HCT116 (cell line): ENCODE measurements at regions of chr15 and their contacts with region 1.

Region 1: GRCh38 chr15:101258238-101259144 is 6.6 kb upstream of the CHSY1 start:
- DNase-seq: peak; percentile 51
- ATAC-seq: peak; percentile 88
- H3K4me3 ChIP-seq: no peak overlapping the region
- H3K27ac ChIP-seq: no peak overlapping the region
- H3K4me1 ChIP-seq: no peaks in the 10 kb centered on the region
- H3K27me3 ChIP-seq: no peaks in the 10 kb centered on the region
- CTCF ChIP-seq: peak; percentile 79 to 97 (median 96)
- POLR2A ChIP-seq: no peak
- RAD21 ChIP-seq: peak; percentile 97

Region 2: GRCh38 chr15:100627789-100628395 is 630.6 kb before region 1 on chr15:
- CTCF ChIA-PET with region 1: no interaction called
- POLR2A ChIA-PET with region 1: no interaction called
- RAD21 ChIA-PET with region 1: no interaction called
- intact Hi-C with region 1: loop called (anchors 1 kb)
- DNase-seq: peak; percentile 69
- ATAC-seq: peak; percentile 92
- H3K4me3 ChIP-seq: no peak overlapping the region
- H3K27ac ChIP-seq: no peak overlapping the region
- H3K4me1 ChIP-seq: no peaks in the 10 kb centered on the region
- H3K27me3 ChIP-seq: no peaks in the 10 kb centered on the region
- CTCF ChIP-seq: peak; percentile 69 to 84 (median 73)
- POLR2A ChIP-seq: no peak
- RAD21 ChIP-seq: peak; percentile 86

Region 3: GRCh38 chr15:101014921-101015841 is 243.3 kb before region 1 on chr15:
- CTCF ChIA-PET with region 1: interaction called, 14 read pairs
- POLR2A ChIA-PET with region 1: interaction called, 3 read pairs
- RAD21 ChIA-PET with region 1: interaction called in 1 of 2 experiments, 6 read pairs
- intact Hi-C with region 1: loop called (anchors 1 kb)
- DNase-seq: peak; percentile 32
- ATAC-seq: peak; percentile 86
- H3K4me3 ChIP-seq: no peak overlapping the region
- H3K27ac ChIP-seq: no peak overlapping the region
- H3K4me1 ChIP-seq: no peaks in the 10 kb centered on the region
- H3K27me3 ChIP-seq: no peaks in the 10 kb centered on the region
- CTCF ChIP-seq: peak; percentile 89 to 97 (median 89)
- POLR2A ChIP-seq: no peak
- RAD21 ChIP-seq: peak; percentile 87

Region 4: DNA sequence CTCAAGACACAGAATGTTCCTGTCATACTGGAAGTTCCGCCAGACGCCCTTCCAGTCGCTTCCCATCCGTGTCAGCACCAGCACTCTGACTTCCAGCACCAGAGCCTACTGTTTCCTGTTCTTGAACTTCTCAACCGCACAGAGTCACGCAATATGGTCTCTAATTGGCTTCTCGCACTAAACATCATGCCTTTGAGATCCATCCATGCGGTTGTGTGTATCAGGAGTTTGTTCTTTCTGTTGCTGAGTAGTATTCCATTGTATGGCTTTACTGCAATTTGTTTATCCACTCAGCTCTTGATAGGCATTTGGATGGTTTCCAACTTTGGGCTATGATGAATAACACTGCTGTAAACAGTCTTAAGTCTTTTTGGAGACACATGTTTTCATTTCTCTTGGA is 227.3 kb before region 1 on chr15:
- CTCF ChIA-PET with region 1: interaction called, 3 read pairs
- POLR2A ChIA-PET with region 1: no interaction called
- RAD21 ChIA-PET with region 1: no interaction called
- intact Hi-C with region 1: loop called (anchors 5 kb)
- DNase-seq: no peak
- ATAC-seq: no peak
- H3K4me3 ChIP-seq: no peak overlapping the region
- H3K27ac ChIP-seq: no peak overlapping the region
- H3K4me1 ChIP-seq: no peaks in the 10 kb centered on the region
- H3K27me3 ChIP-seq: no peaks in the 10 kb centered on the region
- CTCF ChIP-seq: no peak
- POLR2A ChIP-seq: no peak
- RAD21 ChIP-seq: no peak

Region 5: DNA sequence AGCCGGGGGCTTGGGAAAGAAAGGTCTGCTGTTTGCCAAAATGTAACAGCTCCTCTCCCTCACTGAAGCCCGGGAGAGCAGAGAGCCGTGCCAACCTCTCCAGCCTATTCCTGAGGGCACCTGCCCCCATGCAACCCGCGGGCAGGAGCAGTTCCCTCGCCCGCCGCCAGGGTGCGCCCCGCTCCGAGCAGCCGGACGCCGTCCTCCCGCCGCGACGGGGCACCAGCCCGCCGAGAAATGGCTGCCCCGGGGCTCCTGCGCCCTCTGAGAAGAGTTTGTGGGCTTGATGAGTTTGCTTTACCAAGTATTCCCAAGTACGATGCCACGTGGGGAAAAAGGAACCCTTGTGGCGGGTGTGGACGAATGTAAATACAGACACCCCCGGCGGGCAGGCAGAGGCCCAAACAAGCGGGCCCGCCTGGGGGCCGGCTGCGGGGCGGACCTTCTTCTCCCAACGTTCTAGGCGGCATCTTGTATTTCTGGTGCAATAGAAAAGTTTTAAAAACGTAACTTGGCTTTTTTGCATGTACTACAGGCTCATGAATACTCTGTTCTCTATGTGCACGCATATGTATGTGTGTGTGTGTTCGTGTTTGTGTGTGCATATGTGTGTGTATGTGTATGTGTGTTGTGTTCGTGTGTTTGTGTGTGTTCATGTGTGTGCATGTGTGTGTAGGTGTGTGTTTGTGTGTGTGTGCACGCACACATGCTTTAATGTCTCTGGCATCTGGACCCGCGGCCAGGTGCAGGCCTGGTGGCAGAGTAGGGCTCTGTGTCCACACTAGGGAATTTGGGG is 169.5 kb before region 1 on chr15:
- CTCF ChIA-PET with region 1: interaction called, 6 read pairs
- POLR2A ChIA-PET with region 1: no interaction called
- RAD21 ChIA-PET with region 1: no interaction called
- intact Hi-C with region 1: loop called (anchors 1 kb)
- DNase-seq: peak; percentile 26
- ATAC-seq: peak; percentile 96
- H3K4me3 ChIP-seq: peak overlapping the region; percentile 34 to 57
- H3K27ac ChIP-seq: peak overlapping the region; percentile 3; the same call in 1 of the 2 replicates
- H3K4me1 ChIP-seq: peaks cover 0 to 9% of the 10 kb centered on the region in 2 experiments; a peak in 1 of 4 replicates
- H3K27me3 ChIP-seq: no peaks in the 10 kb centered on the region
- CTCF ChIP-seq: peak; percentile 92 to 99 (median 98)
- POLR2A ChIP-seq: no peak
- RAD21 ChIP-seq: peak; percentile 92